ENCODE measurements at regions of chr10 and their contacts with region 1.

Region 1: DNA sequence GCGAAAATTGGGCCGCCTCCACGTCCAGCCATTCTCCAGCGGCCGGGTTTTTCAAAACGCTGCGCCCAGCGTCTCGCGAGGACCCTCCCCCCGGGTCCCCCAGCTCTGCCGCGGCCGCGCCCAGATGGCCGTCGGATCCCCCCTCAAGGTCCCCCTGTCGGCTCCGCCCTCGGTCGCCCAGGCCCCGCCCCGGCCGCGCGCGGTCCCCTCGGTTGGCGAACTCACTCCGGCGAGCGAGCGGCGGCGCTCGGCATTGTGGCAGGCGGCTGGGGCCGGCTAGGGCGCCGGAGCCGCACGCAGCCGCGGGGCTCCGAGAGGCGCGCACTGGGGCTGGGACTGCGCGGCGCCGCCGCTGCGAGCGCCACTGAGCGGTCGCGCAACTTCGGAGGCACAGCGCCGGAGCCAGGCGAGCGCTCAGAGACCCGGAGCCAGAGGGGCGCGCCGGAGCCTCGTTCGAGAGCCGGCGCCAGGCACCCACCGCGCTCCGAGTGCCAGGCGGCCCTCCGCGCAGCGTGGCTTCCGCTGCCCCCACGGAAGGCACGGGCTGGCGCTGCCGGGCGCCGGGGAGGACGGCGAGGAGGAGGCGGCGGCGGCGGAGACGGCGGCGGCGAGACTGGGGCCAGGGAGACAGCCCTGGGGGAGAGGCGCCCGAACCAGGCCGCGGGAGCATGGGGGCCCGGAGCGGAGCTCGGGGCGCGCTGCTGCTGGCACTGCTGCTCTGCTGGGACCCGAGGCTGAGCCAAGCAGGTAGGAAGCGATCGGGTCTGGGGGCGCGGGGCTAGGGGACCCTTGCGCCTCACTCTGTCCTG is at the start of gene UNC5B:
- DNase-seq: peak; percentile 88
- H3K4me3 Mint-ChIP-seq: peak within 1 kb of the TSS; percentile 64
- H3K27ac Mint-ChIP-seq: no peak within 1 kb of the TSS
- H3K4me1 Mint-ChIP-seq: peaks cover 20% of the 10 kb centered on the region
- H3K27me3 Mint-ChIP-seq: peaks cover 26% of the 10 kb centered on the region
- CTCF ChIP-seq: peak; percentile 24
- total RNA-seq, gene UNC5B: 80.5 and 82.4 TPM in 2 replicates

Region 2: GRCh38 chr10:70549962-70550458 is 662.5 kb before region 1 on chr10:
- CTCF ChIA-PET with region 1: no interaction called
- POLR2A ChIA-PET with region 1: no interaction called
- intact Hi-C with region 1: loop called (anchors 5 kb)
- DNase-seq: peak; percentile 75
- H3K4me3 Mint-ChIP-seq: no peak overlapping the region
- H3K27ac Mint-ChIP-seq: no peak overlapping the region
- H3K4me1 Mint-ChIP-seq: no peaks in the 10 kb centered on the region
- H3K27me3 Mint-ChIP-seq: peaks cover 22% of the 10 kb centered on the region
- CTCF ChIP-seq: peak; percentile 87

Region 3: DNA sequence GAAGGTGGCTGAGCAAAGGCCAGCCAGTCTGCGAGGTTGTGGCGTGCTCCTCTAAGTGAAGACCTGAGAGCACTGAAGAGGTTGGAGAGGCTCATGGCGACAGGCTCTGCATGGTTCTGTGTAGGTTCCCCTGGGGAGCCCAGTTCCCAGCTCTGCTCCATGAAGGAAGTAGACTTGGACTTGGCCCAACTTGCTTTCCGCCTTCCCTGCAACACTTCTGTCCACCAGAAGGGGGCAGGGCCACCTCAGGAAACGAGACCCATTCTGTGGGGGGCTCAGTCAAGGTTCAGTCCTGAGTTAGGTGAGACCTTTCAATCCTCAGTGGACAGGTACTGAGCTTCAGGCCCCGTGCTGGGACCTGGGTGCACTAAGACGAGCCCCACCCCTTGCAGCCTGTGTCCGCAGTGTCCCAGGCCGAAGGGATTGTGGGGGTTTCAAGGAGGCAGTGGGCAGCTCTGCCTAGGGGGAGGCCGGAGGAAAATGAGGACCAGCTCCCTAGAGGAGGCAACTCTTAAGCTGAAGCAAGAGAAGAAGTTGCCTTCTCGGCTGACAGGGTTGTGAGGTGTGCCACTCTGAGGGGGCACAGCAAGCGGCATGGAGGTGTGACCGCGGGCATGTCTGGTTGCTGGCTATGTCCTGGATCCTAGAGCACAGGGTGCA is 309.1 kb before region 1 on chr10:
- CTCF ChIA-PET with region 1: interaction called, 3 read pairs
- POLR2A ChIA-PET with region 1: interaction called, 6 read pairs
- intact Hi-C with region 1: loop called (anchors 1 kb)
- DNase-seq: peak; percentile 53
- H3K4me3 Mint-ChIP-seq: no peak overlapping the region
- H3K27ac Mint-ChIP-seq: no peak overlapping the region
- H3K4me1 Mint-ChIP-seq: no peaks in the 10 kb centered on the region
- H3K27me3 Mint-ChIP-seq: peaks cover 51% of the 10 kb centered on the region
- CTCF ChIP-seq: peak; percentile 81

Region 4: DNA sequence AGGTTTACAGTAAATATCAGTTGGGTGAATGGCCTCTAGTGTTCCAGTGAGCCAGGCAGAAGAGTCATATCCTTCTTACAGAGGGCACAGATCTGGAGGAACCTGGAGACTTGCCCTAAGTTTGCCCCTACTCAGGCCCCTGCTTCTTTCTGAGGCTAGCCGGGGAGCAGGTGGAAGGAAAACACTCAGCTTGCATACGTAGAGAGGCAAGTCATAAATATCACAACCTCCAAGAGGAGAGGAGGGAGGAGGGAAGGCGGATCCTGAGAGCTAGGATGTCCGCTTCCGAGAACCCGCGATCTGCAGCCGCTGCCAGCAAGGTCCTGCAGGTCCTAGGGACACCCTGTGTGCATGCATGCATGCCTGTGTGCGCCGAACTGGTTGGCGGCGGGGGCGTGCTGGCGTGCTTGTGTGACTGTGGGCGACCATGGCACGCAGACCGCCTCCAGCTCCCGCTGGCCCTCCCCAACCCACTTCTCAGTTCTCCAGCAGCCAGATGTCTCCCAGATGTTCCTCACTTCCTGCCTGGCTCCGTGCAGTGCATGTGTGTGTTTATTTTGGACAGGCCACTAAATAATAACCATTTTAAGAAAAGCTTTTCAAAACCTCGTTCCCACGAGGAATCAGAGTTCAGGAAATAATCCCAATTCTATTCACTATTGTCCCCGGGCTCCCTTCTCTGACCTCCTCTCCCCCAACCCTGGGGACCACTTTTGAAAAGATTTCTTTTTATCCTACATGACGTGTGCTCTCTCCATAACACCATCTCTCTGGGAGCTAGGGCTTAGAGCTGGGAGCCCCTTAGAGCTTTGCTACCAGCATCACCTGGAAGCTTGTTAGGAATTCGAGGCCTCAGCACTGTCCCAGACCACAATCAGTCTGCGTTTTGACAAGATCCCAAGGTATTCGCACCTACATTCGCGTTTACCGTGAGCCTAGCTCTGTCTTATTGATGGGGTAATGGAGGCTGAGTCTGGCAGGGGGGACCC is 32.2 kb after region 1 on chr10:
- CTCF ChIA-PET with region 1: interaction called, 7 read pairs
- POLR2A ChIA-PET with region 1: interaction called, 146 read pairs
- intact Hi-C with region 1: no loop called
- DNase-seq: peak; percentile 58
- H3K4me3 Mint-ChIP-seq: peak overlapping the region; percentile 38
- H3K27ac Mint-ChIP-seq: peak overlapping the region; percentile 95
- H3K4me1 Mint-ChIP-seq: peaks cover 68% of the 10 kb centered on the region
- H3K27me3 Mint-ChIP-seq: no peaks in the 10 kb centered on the region
- CTCF ChIP-seq: no peak

Region 5: GRCh38 chr10:71270301-71271220 is 58.0 kb after region 1 on chr10:
- CTCF ChIA-PET with region 1: interaction called, 7 read pairs
- POLR2A ChIA-PET with region 1: interaction called, 21 read pairs
- intact Hi-C with region 1: loop called (anchors 1 kb)
- DNase-seq: peak; percentile 72
- H3K4me3 Mint-ChIP-seq: no peak overlapping the region
- H3K27ac Mint-ChIP-seq: peak overlapping the region; percentile 90
- H3K4me1 Mint-ChIP-seq: peaks cover 44% of the 10 kb centered on the region
- H3K27me3 Mint-ChIP-seq: no peaks in the 10 kb centered on the region
- CTCF ChIP-seq: peak; percentile 46

Region 6: DNA sequence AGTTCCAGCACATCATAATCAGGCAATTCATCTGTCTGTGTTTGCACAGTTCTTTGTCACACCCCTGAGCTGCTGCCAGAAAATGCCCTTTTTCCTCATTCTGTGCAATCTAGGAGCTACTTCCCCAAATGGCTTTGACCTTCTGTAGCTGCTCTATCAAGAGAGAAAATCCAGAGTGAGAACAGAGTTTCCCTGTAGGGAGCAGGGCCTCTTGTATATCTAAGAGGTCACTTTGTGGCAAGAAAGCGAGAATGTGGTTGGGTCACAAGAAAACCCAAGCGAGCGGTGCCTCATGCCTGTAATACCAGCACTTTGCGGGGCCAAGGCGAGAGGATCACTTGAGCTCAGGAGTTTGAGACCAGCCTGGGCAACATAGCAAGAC is 130.9 kb after region 1 on chr10:
- CTCF ChIA-PET with region 1: no interaction called
- POLR2A ChIA-PET with region 1: no interaction called
- intact Hi-C with region 1: no loop called
- DNase-seq: no peak
- H3K4me3 Mint-ChIP-seq: no peak overlapping the region
- H3K27ac Mint-ChIP-seq: peak overlapping the region; percentile 23
- H3K4me1 Mint-ChIP-seq: peaks cover 37% of the 10 kb centered on the region
- H3K27me3 Mint-ChIP-seq: no peaks in the 10 kb centered on the region
- CTCF ChIP-seq: no peak

Measured in MCF 10A (cell line).